ENCODE measurements at regions of chrX and their contacts with region 1.

Region 1: DNA sequence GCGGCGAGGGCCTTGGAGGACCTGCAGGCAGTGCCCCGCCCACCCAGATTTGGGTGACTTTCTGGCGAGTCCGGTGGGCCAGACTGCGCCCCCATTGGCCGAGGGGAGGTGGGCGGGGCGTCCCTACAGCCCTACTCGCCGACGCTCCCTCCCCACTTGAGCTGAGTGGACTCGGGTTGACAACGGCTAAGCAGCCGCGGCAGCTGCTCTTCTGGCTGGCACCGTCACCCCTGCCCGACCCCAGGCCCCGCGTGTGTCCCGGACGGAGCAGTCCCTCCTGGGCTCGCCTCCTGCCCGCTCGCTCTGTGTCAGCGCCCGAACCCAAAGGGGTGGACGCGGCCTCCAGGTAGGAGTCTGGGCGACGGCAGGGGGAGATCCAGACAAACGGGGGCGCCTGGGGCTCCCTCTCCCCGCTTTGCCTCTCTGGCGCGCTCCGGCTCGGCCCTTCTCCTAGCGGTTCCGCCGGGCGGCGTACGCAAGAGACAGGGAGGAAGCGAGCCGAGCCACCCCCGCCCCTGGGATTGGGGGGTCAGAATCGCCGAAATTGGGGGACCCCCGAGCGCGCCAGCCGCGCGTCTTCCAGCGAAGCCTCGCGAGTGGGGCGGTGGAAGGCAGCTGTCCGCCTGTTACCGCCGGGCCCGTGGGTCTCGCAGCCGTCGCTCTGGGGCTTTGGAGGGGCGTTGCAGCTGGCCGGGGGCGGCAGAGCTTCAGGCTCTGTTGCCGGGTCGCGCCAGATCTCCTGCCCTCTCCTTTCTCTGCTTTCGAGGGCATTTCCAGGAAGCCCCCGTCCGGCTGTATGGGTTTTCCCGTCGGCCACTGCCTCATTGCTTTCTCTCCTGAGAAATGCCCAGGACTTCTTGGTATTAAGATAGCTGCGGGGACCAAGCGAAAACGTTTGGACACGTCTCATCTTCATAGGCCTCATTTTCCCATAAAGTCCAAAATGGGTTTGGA is 46.3 kb downstream of the STARD8 start:
- DNase-seq: no peak
- H3K4me3 Mint-ChIP-seq: peak overlapping the region; percentile 84
- H3K27ac Mint-ChIP-seq: peak overlapping the region; percentile 70
- H3K4me1 Mint-ChIP-seq: peaks cover 22% of the 10 kb centered on the region
- H3K27me3 Mint-ChIP-seq: peaks cover 3% of the 10 kb centered on the region

Region 2: GRCh38 chrX:68504237-68504636 is 189.5 kb before region 1 on chrX:
- intact Hi-C with region 1: loop called (anchors 5 kb)
- DNase-seq: peak; percentile 8
- H3K4me3 Mint-ChIP-seq: no peak overlapping the region
- H3K27ac Mint-ChIP-seq: peak overlapping the region; percentile 67
- H3K4me1 Mint-ChIP-seq: peaks cover 40% of the 10 kb centered on the region
- H3K27me3 Mint-ChIP-seq: no peaks in the 10 kb centered on the region

Region 3: GRCh38 chrX:68627986-68628385 is 65.8 kb before region 1 on chrX:
- intact Hi-C with region 1: loop called (anchors 2 kb)
- DNase-seq: no peak
- H3K4me3 Mint-ChIP-seq: no peak overlapping the region
- H3K27ac Mint-ChIP-seq: no peak overlapping the region
- H3K4me1 Mint-ChIP-seq: no peaks in the 10 kb centered on the region
- H3K27me3 Mint-ChIP-seq: peaks cover 3% of the 10 kb centered on the region

Region 4: DNA sequence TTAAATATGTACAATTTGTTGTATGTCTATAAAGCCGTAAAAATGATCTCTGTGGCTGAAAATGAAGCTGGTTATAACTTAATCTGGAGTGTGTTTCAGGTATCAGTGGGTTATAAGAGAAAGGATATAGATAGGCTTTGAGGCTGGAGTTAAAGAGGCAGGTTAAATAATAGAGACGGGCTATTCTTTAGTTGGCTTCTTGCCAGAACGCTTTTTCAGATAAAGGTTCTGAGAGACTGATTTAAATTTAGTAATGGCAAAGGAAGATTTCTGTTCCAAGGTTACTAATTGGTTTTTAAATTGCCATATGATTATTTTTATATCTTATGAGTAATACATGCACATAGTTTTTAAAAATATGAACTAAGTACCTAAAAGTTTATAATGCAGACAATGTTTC is 1238.6 kb after region 1 on chrX:
- intact Hi-C with region 1: no loop called
- DNase-seq: no peak
- H3K4me3 Mint-ChIP-seq: no peak overlapping the region
- H3K27ac Mint-ChIP-seq: no peak overlapping the region
- H3K4me1 Mint-ChIP-seq: no peaks in the 10 kb centered on the region
- H3K27me3 Mint-ChIP-seq: no peaks in the 10 kb centered on the region

Measured in activated T-helper 1 cell treated with anti-CD3 and anti-CD28 coated beads, Interleukin-12 subunit alpha, Interleukin-12 subunit beta, Interleukin-2, Interleukin-4 antibody, amounts not matched to agents 30 ng/mL and 10 ng/mL and 1 ng/mL, durations not matched to agents 14 hours and 24 hours and 36 hours (primary cell).